BJ (cell line): ENCODE measurements at regions of chr1 and their contacts with region 1.

Region 1: GRCh38 chr1:160193091-160193819 is 2.9 kb downstream of the CASQ1 start:
- DNase-seq: peak; percentile 40
- H3K4me3 ChIP-seq: no peak overlapping the region
- H3K27me3 ChIP-seq: peaks cover 2% of the 10 kb centered on the region; the same call in 1 of the 2 replicates
- CTCF ChIP-seq: peak; percentile 94

Region 2: DNA sequence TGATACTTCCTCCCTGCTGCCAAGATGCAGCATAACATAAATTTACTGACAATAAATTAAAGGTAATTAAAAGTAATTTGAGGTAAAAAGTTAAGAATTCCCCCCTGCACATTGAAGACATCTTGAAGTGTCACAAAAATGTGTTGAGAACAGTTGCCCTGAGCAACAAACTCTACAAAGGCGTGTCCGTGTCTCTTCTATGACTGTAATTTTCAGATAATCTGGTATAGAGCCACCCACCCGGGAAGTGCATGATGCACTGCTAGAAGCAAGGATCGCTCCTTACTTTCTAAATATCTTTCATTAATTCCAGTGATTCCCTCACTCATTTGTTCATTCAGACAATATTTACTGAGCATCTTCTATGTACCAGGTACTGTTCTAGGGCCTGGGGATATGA is 13.9 kb before region 1 on chr1:
- CTCF ChIA-PET with region 1: interaction called, 16 read pairs
- POLR2A ChIA-PET with region 1: no interaction called
- DNase-seq: no peak
- H3K4me3 ChIP-seq: no peak overlapping the region
- H3K27me3 ChIP-seq: peaks cover 2% of the 10 kb centered on the region
- CTCF ChIP-seq: no peak

Region 3: GRCh38 chr1:160211046-160211790 is 18.0 kb after region 1 on chr1:
- CTCF ChIA-PET with region 1: interaction called, 19 read pairs
- POLR2A ChIA-PET with region 1: interaction called, 9 read pairs
- DNase-seq: no peak
- H3K4me3 ChIP-seq: no peak overlapping the region
- H3K27me3 ChIP-seq: no peaks in the 10 kb centered on the region
- CTCF ChIP-seq: no peak

Region 4: GRCh38 chr1:160226623-160227022 is 33.4 kb after region 1 on chr1:
- CTCF ChIA-PET with region 1: interaction called, 113 read pairs
- POLR2A ChIA-PET with region 1: no interaction called
- DNase-seq: no peak
- H3K4me3 ChIP-seq: no peak overlapping the region
- H3K27me3 ChIP-seq: no peaks in the 10 kb centered on the region
- CTCF ChIP-seq: no peak

Region 5: GRCh38 chr1:160284782-160285344 is 91.6 kb after region 1 on chr1 and contains the start of gene PEX19:
- CTCF ChIA-PET with region 1: interaction called, 11 read pairs
- POLR2A ChIA-PET with region 1: no interaction called
- DNase-seq: peak; percentile 60
- H3K4me3 ChIP-seq: peak within 1 kb of the TSS; percentile 87
- H3K27me3 ChIP-seq: no peaks in the 10 kb centered on the region
- CTCF ChIP-seq: no peak
- polyA plus RNA-seq, gene PEX19: 52.6 and 69.1 TPM in 2 replicates